K562 (cell line): ENCODE measurements at regions of chr15 and their contacts with region 1.

Region 1: GRCh38 chr15:42832577-42832976 is 88.0 kb downstream of the TTBK2 start:
- DNase-seq: no peak
- ATAC-seq: no peak
- H3K4me3 ChIP-seq: no peak overlapping the region
- H3K27ac ChIP-seq: no peak overlapping the region
- H3K4me1 ChIP-seq: no peaks in the 10 kb centered on the region
- H3K27me3 ChIP-seq: no peaks in the 10 kb centered on the region
- CTCF ChIP-seq: no peak
- EP300 ChIP-seq: no peak
- POLR2A ChIP-seq: no peak
- RAD21 ChIP-seq: no peak

Region 2: GRCh38 chr15:42819786-42820185 is 12.8 kb before region 1 on chr15:
- CTCF ChIA-PET with region 1: no interaction called
- POLR2A ChIA-PET with region 1: interaction called, 10 read pairs
- in situ Hi-C with region 1: no loop called
- intact Hi-C with region 1: no loop called
- DNase-seq: no peak
- ATAC-seq: no peak
- H3K4me3 ChIP-seq: no peak overlapping the region
- H3K27ac ChIP-seq: no peak overlapping the region
- H3K4me1 ChIP-seq: no peaks in the 10 kb centered on the region
- H3K27me3 ChIP-seq: no peaks in the 10 kb centered on the region
- CTCF ChIP-seq: no peak
- EP300 ChIP-seq: no peak
- POLR2A ChIP-seq: no peak
- RAD21 ChIP-seq: no peak